Spleen (tissue), 13 donors: ENCODE measurements at regions of chr12 and their contacts with region 1.

Region 1: DNA sequence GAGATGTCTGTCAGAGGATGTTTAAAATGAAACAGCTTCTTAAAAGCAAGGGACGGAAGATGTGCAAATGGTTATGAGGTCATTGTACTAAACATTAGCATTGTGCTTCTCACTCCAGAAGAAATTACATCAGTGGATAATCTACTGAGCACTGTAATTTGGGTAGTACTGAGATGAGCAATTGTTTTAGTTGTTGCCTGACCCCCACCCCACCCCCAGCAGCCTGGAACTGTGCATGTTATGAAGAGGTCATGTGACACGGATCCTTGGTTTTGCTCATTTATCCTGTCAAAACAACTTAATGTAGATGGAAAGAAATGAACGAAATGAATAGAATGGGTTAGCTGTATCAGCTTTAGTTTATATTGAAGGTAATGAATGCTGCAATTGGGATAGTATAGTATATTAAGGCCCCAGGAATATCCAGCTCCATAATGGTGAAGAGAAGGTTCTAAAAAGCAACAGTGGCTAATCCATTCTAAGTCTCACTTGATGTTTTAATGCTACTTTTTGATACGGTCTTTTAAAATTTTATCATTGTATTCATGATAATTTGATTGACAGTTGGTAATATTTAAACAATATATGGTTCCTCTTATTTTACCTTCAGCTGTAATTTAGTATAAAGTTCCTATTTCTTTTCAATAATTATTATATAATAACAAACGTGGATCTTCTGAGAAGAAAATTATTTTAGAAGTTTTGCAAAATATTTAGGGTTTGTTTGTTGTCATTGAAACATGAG is 58.5 kb downstream of the WNK1 start:
- DNase-seq: no peak
- H3K4me3 ChIP-seq: no peak overlapping the region
- H3K27ac ChIP-seq: no peak overlapping the region
- H3K4me1 ChIP-seq: peaks cover 15 to 87% (median 67%) of the 10 kb centered on the region in 6 donors
- H3K27me3 ChIP-seq: no peaks in the 10 kb centered on the region
- CTCF ChIP-seq: no peak
- POLR2A ChIP-seq: no peak

Region 2: GRCh38 chr12:583234-583869 is 227.5 kb before region 1 on chr12:
- intact Hi-C with region 1: no loop called
- DNase-seq: no peak
- H3K4me3 ChIP-seq: no peak overlapping the region
- H3K27ac ChIP-seq: no peak overlapping the region
- H3K4me1 ChIP-seq: no peaks in the 10 kb centered on the region
- H3K27me3 ChIP-seq: no peaks in the 10 kb centered on the region
- CTCF ChIP-seq: no peak
- POLR2A ChIP-seq: no peak

Region 3: GRCh38 chr12:737122-737739 is 73.6 kb before region 1 on chr12:
- intact Hi-C with region 1: no loop called
- DNase-seq: no peak
- H3K4me3 ChIP-seq: no peak overlapping the region
- H3K27ac ChIP-seq: peak overlapping the region in 4 of 8 donors; percentile 14 to 50 (median 40)
- H3K4me1 ChIP-seq: peaks cover 0 to 18% (median 0%) of the 10 kb centered on the region in 6 donors
- H3K27me3 ChIP-seq: no peaks in the 10 kb centered on the region
- CTCF ChIP-seq: no peak
- POLR2A ChIP-seq: no peak

Region 4: DNA sequence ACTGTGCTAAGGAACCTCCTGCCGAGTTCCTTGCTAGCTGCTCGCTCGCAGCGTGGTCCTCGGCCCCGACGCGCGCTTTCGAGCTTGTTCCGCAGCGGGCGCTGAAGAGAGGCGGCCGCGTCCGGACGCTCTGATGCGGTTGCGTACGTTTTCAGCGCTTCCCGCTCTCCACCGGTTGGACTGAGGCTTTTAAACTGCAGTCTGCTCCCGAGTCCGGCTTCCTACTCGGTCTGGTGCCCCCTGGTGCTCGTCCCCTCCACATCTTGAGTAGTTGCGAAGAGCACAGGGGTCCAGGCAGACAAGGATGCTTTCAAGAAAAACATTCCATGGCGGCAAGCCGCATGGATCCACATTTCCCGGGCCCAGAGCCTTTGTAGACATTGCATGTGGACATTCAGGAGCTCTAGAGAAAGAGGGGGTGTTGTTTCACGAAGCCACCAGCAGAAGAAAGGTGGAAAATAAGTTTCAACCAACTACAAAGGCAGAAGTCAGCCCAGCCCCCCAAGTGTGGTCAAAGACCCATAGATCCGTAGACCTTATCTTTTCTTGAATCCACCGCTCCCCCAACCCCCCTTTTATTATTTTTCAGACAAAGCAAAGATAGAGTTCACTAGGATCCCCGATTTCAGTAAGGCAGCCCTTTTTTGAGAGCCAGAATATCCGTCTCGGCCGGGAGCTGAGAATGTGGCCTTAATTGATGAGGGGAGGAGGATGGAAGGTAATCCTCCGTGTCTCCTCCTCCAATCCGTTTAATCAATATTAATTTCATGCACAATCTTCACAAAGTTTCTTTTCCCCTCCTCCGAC is 59.4 kb before region 1 on chr12:
- intact Hi-C with region 1: loop called (anchors 10 kb)
- DNase-seq: peak; percentile 98
- H3K4me3 ChIP-seq: peak overlapping the region; percentile 70 to 89 (median 79)
- H3K27ac ChIP-seq: peak overlapping the region; percentile 85 to 100 (median 98)
- H3K4me1 ChIP-seq: peaks cover 14 to 53% (median 42%) of the 10 kb centered on the region in 6 donors
- H3K27me3 ChIP-seq: no peaks in the 10 kb centered on the region
- CTCF ChIP-seq: peak; percentile 66 to 93 (median 84)
- POLR2A ChIP-seq: peak in 1 of 3 donors; percentile 47

Region 5: DNA sequence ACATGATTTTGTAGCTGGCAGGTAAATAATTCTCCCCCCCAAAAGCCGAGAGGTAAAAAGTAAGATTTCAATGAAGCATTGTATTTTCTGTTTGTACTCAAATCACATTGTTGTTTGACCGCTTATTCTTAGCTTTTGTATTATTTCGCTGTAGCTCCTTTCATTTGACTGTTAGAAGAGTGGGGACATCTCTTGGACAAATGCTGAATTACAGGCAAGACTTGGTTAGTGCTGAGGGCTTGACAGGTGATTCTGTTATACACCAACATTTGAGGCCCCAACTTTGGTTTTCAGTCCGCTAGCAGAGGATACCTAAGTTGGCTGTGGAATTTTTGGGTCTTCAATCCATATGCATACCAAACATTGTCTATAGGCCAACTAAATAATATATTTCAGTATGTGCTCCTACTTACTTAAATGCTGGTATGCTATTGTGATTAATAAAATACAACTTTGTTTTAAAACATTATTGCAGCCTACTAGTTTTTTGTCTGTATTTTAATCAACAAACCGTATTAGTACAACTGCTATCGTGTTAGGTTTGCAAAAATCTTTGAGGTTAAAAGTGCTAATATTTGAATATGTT is 282.4 kb after region 1 on chr12:
- intact Hi-C with region 1: loop called (anchors 10 kb)
- DNase-seq: no peak
- H3K4me3 ChIP-seq: no peak overlapping the region
- H3K27ac ChIP-seq: no peak overlapping the region
- H3K4me1 ChIP-seq: peaks cover 0 to 15% (median 3%) of the 10 kb centered on the region in 6 donors
- H3K27me3 ChIP-seq: no peaks in the 10 kb centered on the region
- CTCF ChIP-seq: peak; percentile 24 to 75 (median 68)
- POLR2A ChIP-seq: no peak